ENCODE measurements at regions of chr14 and their contacts with region 1.

Region 1: DNA sequence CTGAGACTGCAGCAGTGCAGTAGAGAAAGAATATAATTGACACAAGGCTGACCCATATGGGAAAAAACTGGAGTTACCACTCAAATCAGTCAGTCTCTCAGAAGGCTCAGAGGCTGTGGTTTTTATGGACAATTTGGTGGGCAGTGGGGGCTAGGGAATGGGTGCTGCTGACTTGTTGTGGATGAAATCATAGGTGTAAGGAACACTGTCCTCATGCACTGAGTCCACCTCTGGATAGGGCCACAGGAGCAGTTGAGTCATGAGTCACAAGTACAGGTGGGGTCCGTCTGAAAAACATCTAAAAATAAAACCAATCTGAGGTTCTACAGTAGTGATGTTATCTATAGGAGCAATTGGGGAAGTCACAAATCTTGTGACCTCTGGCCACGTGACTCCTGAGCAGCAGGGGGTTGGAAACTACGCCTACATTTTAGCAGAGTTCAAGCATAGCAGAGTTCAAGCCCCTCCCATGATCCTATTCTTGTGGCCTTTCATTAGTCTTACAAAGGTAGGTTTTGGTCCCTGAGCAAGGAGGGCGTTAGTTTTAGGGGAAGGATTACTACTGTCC is 18.1 kb upstream of the SGPP1 start:
- DNase-seq: peak; percentile 80
- H3K4me3 ChIP-seq: peak overlapping the region; percentile 42
- H3K27ac ChIP-seq: peak overlapping the region; percentile 82
- H3K4me1 ChIP-seq: peaks cover 55% of the 10 kb centered on the region
- CTCF ChIP-seq: no peak

Region 2: DNA sequence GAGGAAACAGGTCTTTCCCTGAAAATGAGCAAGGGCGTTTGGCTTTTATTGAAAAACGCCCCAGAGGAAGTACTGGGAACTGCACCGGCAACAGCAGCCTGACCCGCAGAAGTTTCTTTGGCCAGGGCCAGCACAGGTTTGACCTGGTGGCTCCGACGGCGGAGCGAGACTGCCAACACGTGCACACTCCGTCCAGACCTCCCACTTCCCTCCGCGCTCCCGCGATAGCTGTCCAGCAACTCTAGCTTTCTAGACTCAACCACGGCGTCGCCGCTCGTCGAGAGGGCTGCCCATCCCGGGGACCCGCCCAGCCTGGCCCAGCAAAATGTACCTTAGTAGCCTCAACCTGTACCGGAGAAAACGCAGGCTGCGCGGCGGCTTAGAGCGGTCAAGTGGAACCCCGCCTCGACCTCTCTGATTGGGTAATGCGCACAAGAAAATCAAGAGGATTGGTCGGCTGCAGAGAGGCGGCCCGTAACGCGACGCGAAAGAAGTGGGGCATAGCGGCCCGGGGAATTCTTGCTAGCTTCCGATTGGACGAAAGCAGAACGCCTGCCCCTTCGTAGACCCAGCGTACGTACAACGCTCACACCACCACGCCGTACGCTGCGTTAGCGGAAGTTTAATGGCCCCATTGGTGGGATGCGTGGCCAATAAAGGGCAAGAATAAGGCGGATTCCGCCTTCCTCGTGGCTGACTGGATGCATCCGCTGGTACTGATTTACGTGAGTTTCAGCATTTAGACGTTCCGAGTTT is 104.3 kb before region 1 on chr14 and contains the start of gene WDR89:
- CTCF ChIA-PET with region 1: no interaction called
- POLR2A ChIA-PET with region 1: interaction called, 3 read pairs
- intact Hi-C with region 1: loop called (anchors 2 kb)
- DNase-seq: peak; percentile 99
- H3K4me3 ChIP-seq: peak within 1 kb of the TSS; percentile 76
- H3K27ac ChIP-seq: peak within 1 kb of the TSS; percentile 89
- H3K4me1 ChIP-seq: peaks cover 30% of the 10 kb centered on the region
- CTCF ChIP-seq: peak; percentile 78
- total RNA-seq, gene WDR89: 14.7 and 15.5 TPM in 2 replicates

Region 3: GRCh38 chr14:63757211-63757610 is 11.3 kb after region 1 on chr14:
- CTCF ChIA-PET with region 1: no interaction called
- POLR2A ChIA-PET with region 1: interaction called, 17 read pairs
- intact Hi-C with region 1: no loop called
- DNase-seq: no peak
- H3K4me3 ChIP-seq: no peak overlapping the region
- H3K27ac ChIP-seq: no peak overlapping the region
- H3K4me1 ChIP-seq: peaks cover 10% of the 10 kb centered on the region
- CTCF ChIP-seq: no peak

Region 4: GRCh38 chr14:63863004-63863403 is 117.1 kb after region 1 on chr14:
- CTCF ChIA-PET with region 1: no interaction called
- POLR2A ChIA-PET with region 1: interaction called, 5 read pairs
- intact Hi-C with region 1: loop called (anchors 5 kb)
- DNase-seq: peak; percentile 16
- H3K4me3 ChIP-seq: peak overlapping the region; percentile 64
- H3K27ac ChIP-seq: peak overlapping the region; percentile 75
- H3K4me1 ChIP-seq: peaks cover 82% of the 10 kb centered on the region
- CTCF ChIP-seq: no peak

Measured in OCI-LY7 (cell line).